ENCODE measurements at regions of chr16 and their contacts with region 1.

Region 1: GRCh38 chr16:83125999-83126568 is 499.3 kb downstream of the CDH13 start:
- DNase-seq: no peak
- ATAC-seq: no peak
- H3K4me3 ChIP-seq: no peak overlapping the region
- H3K27ac ChIP-seq: no peak overlapping the region
- H3K4me1 ChIP-seq: no peaks in the 10 kb centered on the region
- H3K27me3 ChIP-seq: no peaks in the 10 kb centered on the region
- CTCF ChIP-seq: no peak

Region 2: DNA sequence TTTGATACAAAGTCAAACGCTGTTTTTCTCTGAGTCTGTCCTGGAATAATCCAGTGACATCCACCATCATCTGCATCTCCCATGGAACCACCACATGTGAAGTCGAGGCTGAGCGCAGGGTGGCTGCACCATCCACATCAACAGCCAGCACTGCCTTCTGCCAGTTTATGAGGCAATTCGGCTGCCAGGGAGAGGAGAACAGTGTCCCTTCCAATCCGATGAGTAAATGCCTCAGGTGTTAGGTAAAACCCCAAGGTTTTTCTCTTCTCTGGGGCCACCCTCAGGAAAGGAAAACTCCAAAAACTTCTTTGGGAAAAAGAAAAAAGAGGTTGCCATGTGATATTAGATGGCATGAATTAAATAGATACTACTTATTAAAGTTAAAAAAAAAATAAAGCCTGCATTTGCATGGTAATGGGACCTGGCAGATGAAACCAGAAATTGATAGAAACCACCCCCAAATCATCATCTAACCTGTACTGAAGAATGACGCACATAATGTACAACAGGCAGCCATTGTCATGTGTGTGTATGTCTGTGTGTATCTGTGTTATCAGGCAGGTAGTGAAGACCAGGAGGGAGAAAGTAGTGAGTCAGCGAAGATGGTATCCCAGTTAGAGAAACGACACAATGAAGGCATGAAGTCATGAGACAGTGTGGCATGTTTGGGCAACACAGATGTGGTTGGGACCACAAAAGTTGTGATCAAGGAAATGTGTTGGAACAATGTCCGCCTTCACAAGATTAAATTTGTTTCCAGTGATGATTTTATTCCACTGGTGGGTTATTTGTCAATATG is 20.6 kb before region 1 on chr16:
- intact Hi-C with region 1: loop called in 1 of 2 experiments (anchors 2 kb)
- DNase-seq: no peak
- ATAC-seq: no peak
- H3K4me3 ChIP-seq: no peak overlapping the region
- H3K27ac ChIP-seq: no peak overlapping the region
- H3K4me1 ChIP-seq: no peaks in the 10 kb centered on the region
- H3K27me3 ChIP-seq: no peaks in the 10 kb centered on the region
- CTCF ChIP-seq: no peak